Activated CD4-positive, alpha-beta memory T cell treated with anti-CD3 and anti-CD28 coated beads for 36 hours (primary cell): ENCODE measurements at regions of chr12 and their contacts with region 1.

Region 1: GRCh38 chr12:57069523-57069922 is 9.1 kb downstream of the NEMP1 start:
- DNase-seq: peak; percentile 68
- H3K4me3 Mint-ChIP-seq: peak overlapping the region; percentile 17
- H3K27ac Mint-ChIP-seq: peak overlapping the region; percentile 91
- H3K4me1 Mint-ChIP-seq: peaks cover 63% of the 10 kb centered on the region
- H3K27me3 Mint-ChIP-seq: no peaks in the 10 kb centered on the region

Region 2: GRCh38 chr12:57088459-57089248 is 19.1 kb after region 1 on chr12 and contains the start of gene NAB2:
- CTCF ChIA-PET with region 1: interaction called, 251 read pairs
- POLR2A ChIA-PET with region 1: interaction called, 6 read pairs
- intact Hi-C with region 1: loop called (anchors 1 kb)
- DNase-seq: peak; percentile 92
- H3K4me3 Mint-ChIP-seq: peak within 1 kb of the TSS; percentile 91
- H3K27ac Mint-ChIP-seq: peak within 1 kb of the TSS; percentile 95
- H3K4me1 Mint-ChIP-seq: peaks cover 61% of the 10 kb centered on the region
- H3K27me3 Mint-ChIP-seq: no peaks in the 10 kb centered on the region
- total RNA-seq, gene NAB2: 39.6 to 41.6 TPM

Region 3: GRCh38 chr12:57182921-57183790 is 113.6 kb after region 1 on chr12:
- CTCF ChIA-PET with region 1: interaction called, 33 read pairs
- POLR2A ChIA-PET with region 1: no interaction called
- intact Hi-C with region 1: loop called (anchors 2 kb)
- DNase-seq: peak; percentile 87
- H3K4me3 Mint-ChIP-seq: no peak overlapping the region
- H3K27ac Mint-ChIP-seq: no peak overlapping the region
- H3K4me1 Mint-ChIP-seq: no peaks in the 10 kb centered on the region
- H3K27me3 Mint-ChIP-seq: no peaks in the 10 kb centered on the region

Region 4: GRCh38 chr12:57229634-57230380 is 160.3 kb after region 1 on chr12 and contains the start of gene SHMT2:
- CTCF ChIA-PET with region 1: no interaction called
- POLR2A ChIA-PET with region 1: no interaction called
- intact Hi-C with region 1: no loop called
- DNase-seq: peak; percentile 96
- H3K4me3 Mint-ChIP-seq: peak within 1 kb of the TSS; percentile 98
- H3K27ac Mint-ChIP-seq: peak within 1 kb of the TSS; percentile 94
- H3K4me1 Mint-ChIP-seq: peaks cover 56% of the 10 kb centered on the region
- H3K27me3 Mint-ChIP-seq: peaks cover 20% of the 10 kb centered on the region
- total RNA-seq, gene SHMT2: 401 to 404 TPM